ENCODE measurements at regions of chr1 and their contacts with region 1.

Region 1: GRCh38 chr1:220089650-220090556 is at the start of gene BPNT1:
- DNase-seq: peak; percentile 100
- ATAC-seq: peak; percentile 81
- H3K4me3 ChIP-seq: peak within 1 kb of the TSS; percentile 73
- H3K27ac ChIP-seq: peak within 1 kb of the TSS; percentile 63
- H3K4me1 ChIP-seq: peaks cover 9% of the 10 kb centered on the region; the same call in 1 of the 2 replicates
- H3K27me3 ChIP-seq: no peaks in the 10 kb centered on the region
- CTCF ChIP-seq: no peak
- EP300 ChIP-seq: no peak
- POLR2A ChIP-seq: peak; percentile 86
- RAD21 ChIP-seq: no peak
- polyA plus RNA-seq, gene BPNT1: 55.9 to 78.4 TPM

Region 2: GRCh38 chr1:220046052-220046930 is 43.6 kb before region 1 on chr1 and contains the start of gene EPRS1:
- CTCF ChIA-PET with region 1: interaction called, 4 read pairs
- POLR2A ChIA-PET with region 1: interaction called, 5 read pairs
- RAD21 ChIA-PET with region 1: interaction called, 4 read pairs
- SMC1A ChIA-PET with region 1: interaction called, 3 read pairs
- in situ Hi-C with region 1: no loop called
- intact Hi-C with region 1: loop called (anchors 1 kb)
- DNase-seq: peak; percentile 98
- ATAC-seq: peak; percentile 98
- H3K4me3 ChIP-seq: peak within 1 kb of the TSS; percentile 81
- H3K27ac ChIP-seq: peak within 1 kb of the TSS; percentile 81
- H3K4me1 ChIP-seq: peaks cover 5% of the 10 kb centered on the region; the same call in 1 of the 2 replicates
- H3K27me3 ChIP-seq: no peaks in the 10 kb centered on the region
- CTCF ChIP-seq: peak; percentile 61 to 67 (median 66); a peak in 5 of 6 replicates
- EP300 ChIP-seq: no peak
- POLR2A ChIP-seq: peak; percentile 96
- RAD21 ChIP-seq: peak; percentile 38; the same call in 1 of the 2 replicates
- polyA plus RNA-seq, gene EPRS1: 94.6 to 104 TPM

Region 3: DNA sequence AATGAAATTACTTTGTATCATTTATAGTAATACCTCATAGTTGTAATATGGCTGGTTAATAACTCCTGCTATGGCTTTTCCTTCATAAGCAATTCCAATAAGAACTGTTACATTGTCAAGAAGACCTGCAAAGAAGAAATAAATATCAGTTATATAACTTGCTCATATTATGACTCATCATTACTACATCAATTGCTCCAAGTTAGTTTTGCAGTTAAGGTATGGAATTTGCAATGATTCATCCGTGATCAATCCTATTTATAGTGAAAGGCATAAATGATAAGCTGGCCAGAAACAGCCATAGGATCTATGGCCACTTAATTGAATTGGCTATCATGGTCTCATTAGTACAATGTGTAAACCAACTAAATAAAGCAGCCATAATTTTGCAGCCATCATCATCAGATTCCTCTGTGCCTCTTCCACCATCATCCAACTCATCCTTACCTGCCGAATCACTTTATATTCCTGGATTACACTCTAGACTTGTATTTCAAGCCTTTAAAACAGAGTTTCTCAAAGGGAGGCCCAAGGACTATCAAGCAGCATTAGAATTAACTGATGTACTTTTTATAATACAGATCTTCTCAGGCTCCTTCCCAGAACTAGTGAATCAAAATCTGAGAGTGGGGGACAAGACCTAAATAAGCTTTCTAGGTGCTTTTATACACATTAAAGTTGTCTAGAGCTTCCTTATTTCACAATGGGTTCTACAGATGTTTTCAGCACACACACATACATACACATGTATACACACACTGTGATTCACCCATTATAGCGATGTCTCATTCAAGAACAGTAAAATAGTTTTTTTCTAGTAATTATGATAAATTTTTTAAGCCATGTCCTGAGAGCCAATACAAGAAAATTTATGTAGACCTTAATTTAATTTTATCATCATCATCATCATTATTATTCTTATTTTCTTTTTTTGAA is 22.4 kb before region 1 on chr1:
- CTCF ChIA-PET with region 1: interaction called, 6 read pairs
- POLR2A ChIA-PET with region 1: interaction called, 12 read pairs
- RAD21 ChIA-PET with region 1: no interaction called
- SMC1A ChIA-PET with region 1: interaction called, 4 read pairs
- in situ Hi-C with region 1: no loop called
- intact Hi-C with region 1: no loop called
- DNase-seq: no peak
- ATAC-seq: no peak
- H3K4me3 ChIP-seq: no peak overlapping the region
- H3K27ac ChIP-seq: no peak overlapping the region
- H3K4me1 ChIP-seq: no peaks in the 10 kb centered on the region
- H3K27me3 ChIP-seq: no peaks in the 10 kb centered on the region
- CTCF ChIP-seq: no peak
- EP300 ChIP-seq: no peak
- POLR2A ChIP-seq: no peak
- RAD21 ChIP-seq: no peak

Region 4: DNA sequence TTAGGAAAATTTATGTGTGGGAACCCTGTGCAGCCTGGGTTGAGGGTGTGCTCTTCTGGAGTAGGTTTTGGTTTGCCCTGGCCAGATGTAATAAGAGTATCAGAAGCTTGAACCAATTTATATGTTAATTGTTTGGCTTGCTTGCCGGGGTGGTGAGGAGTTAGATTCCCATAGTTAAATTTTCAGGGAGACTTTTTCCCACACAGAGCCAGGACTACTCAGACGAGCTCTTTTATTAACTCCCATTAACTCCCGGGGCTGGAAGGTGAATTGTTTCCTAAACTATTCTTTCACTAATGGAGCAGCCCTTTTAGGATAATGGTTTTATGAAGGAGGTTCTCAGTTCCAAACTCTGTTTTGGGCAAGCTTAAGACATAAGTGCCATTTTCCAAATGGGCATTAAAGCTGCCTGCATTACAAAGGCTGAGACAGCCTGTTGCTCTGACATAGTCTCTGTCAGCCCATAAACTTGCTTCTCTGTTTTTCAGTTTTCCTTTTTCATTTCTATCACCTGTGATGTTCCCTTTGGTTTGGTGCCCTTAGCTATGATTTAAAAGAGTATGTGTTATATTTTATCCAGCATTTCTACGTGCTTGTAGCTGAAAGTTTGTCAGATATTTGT is 200.3 kb after region 1 on chr1:
- CTCF ChIA-PET with region 1: no interaction called
- POLR2A ChIA-PET with region 1: no interaction called
- RAD21 ChIA-PET with region 1: no interaction called
- SMC1A ChIA-PET with region 1: no interaction called
- in situ Hi-C with region 1: no loop called
- intact Hi-C with region 1: no loop called
- DNase-seq: no peak
- ATAC-seq: no peak
- H3K4me3 ChIP-seq: no peak overlapping the region
- H3K27ac ChIP-seq: no peak overlapping the region
- H3K4me1 ChIP-seq: no peaks in the 10 kb centered on the region
- H3K27me3 ChIP-seq: no peaks in the 10 kb centered on the region
- CTCF ChIP-seq: no peak
- EP300 ChIP-seq: no peak
- POLR2A ChIP-seq: no peak
- RAD21 ChIP-seq: no peak

Measured in GM12878 (cell line).